ENCODE measurements at regions of chr9 and their contacts with region 1.

Region 1: DNA sequence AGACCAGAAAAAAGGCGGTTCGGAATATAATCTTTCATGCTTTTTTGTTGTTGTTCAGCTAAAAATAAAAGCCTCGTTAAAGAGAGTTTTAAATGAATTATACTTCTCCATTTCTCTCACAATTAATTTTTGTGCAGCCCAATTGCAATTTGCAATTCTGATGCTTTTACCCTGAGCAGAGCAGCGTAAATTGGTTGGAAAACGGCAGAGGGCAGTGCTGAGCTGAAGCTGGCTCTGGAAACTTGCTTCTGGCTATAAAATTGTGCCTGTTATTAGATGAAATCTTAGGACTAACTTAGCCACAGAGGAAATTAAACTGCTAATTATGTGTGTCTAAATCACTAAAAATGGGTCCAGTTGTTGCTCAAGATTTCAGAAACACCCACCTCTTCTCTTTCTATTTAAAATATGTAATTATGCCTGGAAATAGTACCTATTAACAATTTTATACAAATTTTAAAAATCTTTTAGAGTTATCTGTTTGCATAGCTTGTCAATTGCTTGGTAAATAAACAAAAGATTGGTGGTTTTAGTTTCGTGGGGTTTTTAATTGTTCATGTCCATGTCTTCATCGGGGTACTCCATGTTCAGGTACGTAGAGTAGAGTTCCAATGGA is 441.8 kb upstream of the TLE4 start:
- H3K4me3 ChIP-seq: no peak overlapping the region
- H3K27ac ChIP-seq: no peak overlapping the region
- H3K4me1 ChIP-seq: no peaks in the 10 kb centered on the region; the same call in 1 of the 2 replicates
- CTCF ChIP-seq: peak; percentile 19; the same call in 1 of the 2 replicates

Region 2: DNA sequence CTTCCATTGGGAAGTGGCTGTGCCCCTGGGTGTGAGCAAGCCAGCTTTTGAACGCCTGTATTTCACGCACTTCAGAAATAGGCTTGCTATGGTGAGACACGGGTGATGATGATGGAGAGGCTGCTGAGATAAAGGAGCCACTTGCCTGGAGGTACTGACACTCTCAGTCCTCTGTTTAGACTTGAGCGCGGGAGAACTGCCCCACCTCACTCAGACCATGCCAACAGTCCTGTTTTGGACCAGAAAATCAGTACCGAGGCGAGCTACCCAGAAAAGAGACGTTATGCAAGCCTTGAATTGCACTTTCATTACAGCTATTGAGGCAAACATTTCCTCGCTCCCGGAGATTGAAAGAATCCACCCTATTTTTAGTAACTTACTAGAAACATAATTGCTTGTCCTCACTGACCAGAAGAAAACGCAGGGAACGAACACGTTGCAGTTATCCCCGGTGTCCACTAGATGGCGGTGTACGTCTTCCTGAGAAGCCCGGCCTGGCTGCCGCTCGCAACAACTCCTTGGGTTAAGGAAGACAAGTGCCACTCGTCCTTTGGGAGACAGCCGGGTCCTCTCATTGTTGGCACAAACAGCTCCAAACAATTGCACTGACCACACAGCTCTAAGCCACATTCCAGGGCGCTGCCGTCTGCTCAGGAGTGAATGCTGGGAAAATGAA is 690.6 kb before region 1 on chr9:
- CTCF ChIA-PET with region 1: interaction called, 11 read pairs
- POLR2A ChIA-PET with region 1: no interaction called
- H3K4me3 ChIP-seq: no peak overlapping the region
- H3K27ac ChIP-seq: no peak overlapping the region
- H3K4me1 ChIP-seq: no peaks in the 10 kb centered on the region
- CTCF ChIP-seq: peak; percentile 70

Region 3: DNA sequence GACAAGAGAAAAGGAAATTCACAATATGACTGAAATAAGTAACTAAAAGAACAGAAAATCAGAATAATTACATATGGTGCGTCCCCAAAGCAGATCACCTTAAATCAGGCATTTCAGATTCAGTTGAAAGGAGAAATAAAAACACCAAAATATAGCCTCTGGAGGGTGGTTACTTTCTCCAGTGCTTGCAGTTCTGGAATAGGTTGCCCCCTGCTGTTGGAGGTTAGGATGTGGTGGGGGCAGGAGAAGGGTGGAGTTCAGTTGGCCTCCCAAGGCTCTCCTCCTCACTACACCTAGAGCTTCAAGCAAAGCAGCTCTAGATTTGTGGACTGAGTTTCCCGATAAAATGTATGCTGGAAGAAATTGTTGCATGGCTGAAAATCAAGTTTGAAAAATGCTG is 103.6 kb after region 1 on chr9:
- CTCF ChIA-PET with region 1: interaction called, 15 read pairs
- POLR2A ChIA-PET with region 1: no interaction called
- H3K4me3 ChIP-seq: no peak overlapping the region
- H3K27ac ChIP-seq: no peak overlapping the region
- H3K4me1 ChIP-seq: no peaks in the 10 kb centered on the region
- CTCF ChIP-seq: no peak

Region 4: GRCh38 chr9:79256691-79257213 is 126.8 kb after region 1 on chr9:
- CTCF ChIA-PET with region 1: interaction called, 21 read pairs
- POLR2A ChIA-PET with region 1: no interaction called
- H3K4me3 ChIP-seq: peak overlapping the region; percentile 42
- H3K27ac ChIP-seq: peak overlapping the region; percentile 47
- H3K4me1 ChIP-seq: no peaks in the 10 kb centered on the region
- CTCF ChIP-seq: no peak